GM18951 (cell line): ENCODE measurements at regions of chr16 and their contacts with region 1.

Region 1: DNA sequence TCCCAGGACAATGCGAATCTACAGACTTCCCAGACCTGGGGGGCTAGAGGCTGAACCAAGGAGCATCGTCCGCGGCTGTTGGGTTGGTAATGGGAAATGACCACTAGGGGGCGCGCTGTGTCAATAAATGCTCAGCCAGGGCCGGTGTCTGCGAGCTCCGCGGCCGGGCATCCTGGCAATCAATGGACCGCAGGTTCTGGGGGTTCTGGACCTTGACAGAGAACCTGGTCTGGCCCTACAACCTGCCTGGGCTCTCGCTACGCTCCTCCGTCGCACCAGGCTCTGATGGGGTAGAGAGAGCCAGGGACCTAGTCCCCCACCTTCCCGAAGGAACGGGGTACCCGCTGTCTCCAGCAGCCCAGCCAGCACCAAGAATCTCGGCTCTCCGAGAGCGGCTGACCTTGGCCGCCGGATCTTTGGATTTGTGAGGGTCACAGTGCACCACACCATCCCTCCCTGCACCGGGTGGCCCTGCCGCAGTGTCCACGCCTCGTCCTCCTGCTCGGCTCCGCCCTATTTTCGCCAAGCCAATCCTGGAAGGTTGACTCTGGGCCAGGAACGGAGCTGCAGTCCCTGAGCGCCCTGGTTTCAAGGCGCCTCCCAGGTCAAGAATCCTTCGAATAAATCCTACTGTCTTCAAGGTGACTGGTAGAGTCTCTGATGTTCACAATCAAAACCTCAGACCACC is 20.4 kb upstream of the BEAN1 start:
- POLR2A ChIP-seq: no peak

Region 2: DNA sequence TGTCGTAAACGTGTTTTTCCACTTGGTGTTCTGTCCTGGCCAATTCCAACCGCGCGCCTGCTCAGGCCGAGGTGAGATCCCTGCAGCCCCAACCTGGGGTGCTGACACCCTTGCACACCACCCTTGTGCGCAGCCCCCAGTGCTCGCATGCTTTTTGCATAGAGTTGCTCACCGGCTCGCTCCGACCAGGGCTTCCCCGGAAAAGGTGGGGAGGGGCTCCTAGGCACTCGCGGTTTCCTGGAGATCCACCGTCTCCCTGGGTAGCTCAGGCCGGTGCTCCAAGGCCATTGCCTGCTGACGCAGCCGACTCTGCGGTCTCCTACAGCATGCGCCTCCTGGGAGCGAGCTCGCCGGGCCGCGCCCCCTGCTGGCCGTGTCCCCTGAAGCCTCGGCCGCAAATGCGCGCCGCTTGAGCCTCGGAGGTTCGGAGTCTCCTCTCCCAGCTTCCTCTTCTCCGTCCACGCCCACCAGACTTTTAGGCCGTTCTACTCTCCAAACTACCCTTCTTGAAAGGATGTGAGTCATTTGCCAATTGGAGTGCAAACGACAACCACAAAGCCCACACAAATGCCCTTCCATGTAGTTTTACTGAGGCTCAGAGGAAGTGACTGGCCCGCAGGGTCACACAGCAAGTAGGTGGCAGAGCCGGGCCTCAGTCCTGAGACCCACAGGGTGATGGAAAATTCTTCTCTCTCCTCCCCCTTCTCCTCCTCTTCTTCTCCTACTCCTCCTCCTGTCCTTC is 466.4 kb after region 1 on chr16:
- in situ Hi-C with region 1: loop called (anchors 25 kb)
- POLR2A ChIP-seq: peak; percentile 43